Left colon (tissue), 2 donors: ENCODE measurements at regions of chr11 and their contacts with region 1.

Region 1: DNA sequence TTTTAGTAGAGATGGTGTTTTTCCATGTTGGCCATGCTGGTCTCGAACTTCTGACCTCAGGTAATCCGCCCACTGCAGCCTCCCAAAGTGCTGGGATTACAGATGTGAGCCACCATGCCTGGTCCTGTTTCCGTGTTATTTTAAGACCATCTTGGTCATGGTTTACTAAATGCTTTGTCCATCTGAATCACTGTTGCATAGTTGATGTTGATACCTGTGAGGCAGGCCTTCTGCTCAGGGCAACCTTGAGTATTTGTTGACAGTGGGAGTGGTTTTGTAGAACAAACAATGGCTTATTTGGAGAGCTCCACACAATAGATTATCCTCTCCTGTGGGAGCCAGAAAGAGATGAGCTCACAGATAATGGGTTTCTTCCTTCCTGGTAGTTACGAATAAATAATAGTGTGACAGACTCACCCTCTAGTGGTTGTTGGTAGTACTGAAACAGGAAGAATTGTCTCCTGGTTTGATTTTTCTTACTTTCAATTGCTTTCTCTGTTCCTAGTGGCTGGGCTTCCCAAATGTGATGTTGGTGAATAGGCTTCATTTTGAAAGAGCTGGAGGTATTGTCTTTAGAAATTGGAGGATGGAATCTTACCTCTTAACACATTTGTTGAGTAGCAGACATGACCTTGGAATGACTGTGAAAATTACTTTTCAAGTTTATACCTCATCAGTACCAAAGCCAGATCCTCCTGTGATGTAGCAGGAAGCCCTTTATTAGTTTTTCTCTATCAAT is 39.0 kb downstream of the CTNND1 start:
- DNase-seq: no peak
- ATAC-seq: peak; percentile 67

Region 2: DNA sequence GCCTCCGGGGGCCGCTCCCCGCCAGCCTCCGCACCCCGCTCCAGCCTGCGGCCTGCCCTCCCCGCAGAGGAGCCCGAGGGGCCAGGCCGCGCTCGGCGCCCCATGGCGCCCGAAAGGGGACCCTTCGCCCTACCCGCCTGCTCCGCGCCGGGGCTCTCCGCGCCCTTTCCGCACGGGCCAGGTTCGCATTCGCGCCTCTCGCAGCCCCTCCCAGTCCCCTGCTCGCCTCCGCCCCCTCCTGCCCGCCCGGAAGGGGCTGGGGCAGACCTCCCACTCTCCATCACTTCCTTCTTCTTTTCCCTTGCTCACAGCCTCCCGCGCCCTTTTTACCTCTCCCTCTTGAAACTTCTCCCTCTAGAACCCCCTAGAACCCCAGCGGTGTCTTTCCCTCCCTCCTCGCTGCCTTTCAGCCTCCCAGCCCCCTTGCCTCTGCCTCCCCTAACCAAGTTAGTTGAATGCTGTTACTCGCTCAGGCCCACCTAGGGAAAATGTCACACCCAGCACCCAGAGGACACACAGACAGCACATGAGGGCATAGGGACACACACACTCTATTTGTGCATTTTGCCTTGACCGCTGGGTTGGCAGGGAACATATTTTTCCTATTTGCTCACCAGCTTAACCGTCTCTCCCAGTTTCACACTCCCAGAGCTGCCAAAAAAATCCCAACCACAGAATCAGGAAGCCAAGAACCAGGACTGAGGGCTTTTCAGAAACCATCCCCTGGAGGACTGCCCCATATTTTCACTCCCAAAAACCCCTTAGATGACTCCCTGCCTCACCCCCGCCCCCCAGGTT is 373.5 kb before region 1 on chr11 and contains the start of gene SLC43A3:
- intact Hi-C with region 1: no loop called
- DNase-seq: peak; percentile 62 to 65
- ATAC-seq: peak; percentile 57
- total RNA-seq, gene SLC43A3: 6.9 to 9.6 TPM

Region 3: DNA sequence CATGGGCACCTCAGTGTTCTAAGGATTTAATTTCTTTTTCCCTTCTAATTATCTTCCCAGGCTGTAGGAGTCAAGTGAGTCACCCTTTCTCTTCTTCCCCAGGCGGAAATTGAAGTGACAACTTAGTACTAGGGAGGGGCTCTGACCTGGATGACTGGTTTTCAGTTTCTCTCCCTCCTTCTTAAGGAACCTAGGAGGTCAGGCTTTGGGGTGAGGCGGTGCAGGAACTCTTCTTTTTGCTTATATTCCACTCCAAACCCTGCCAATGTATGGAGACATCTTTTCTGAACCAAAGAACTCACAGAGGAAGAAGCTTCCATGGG is 120.1 kb before region 1 on chr11:
- intact Hi-C with region 1: no loop called
- DNase-seq: no peak
- ATAC-seq: peak; percentile 72

Region 4: DNA sequence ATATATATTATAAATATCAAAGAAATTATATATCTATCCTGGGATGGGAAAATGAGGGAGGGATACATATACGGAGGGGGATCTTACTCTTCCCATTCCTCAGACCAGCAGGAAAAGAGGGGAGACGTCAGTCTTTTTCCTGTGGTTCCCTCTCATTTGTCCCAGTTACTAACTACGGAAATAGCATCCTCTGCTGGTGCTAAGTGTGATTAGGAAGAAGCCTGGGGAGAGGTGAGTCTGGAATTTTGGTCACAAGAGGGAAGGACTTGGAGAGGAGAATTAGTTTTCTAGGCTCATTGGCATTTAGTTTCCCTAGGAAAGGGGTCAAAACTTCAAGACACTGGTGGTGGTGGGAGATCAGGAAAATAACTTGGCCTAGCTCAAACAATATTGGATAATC is 100.2 kb before region 1 on chr11:
- intact Hi-C with region 1: no loop called
- DNase-seq: no peak
- ATAC-seq: no peak

Region 5: GRCh38 chr11:57741132-57742086 is 59.2 kb before region 1 on chr11 and contains the start of gene SELENOH:
- intact Hi-C with region 1: loop called in 1 of 2 experiments (anchors 5 kb)
- DNase-seq: peak; percentile 94 to 98
- ATAC-seq: peak; percentile 96
- total RNA-seq, gene SELENOH: 64.0 to 77.4 TPM

Region 6: DNA sequence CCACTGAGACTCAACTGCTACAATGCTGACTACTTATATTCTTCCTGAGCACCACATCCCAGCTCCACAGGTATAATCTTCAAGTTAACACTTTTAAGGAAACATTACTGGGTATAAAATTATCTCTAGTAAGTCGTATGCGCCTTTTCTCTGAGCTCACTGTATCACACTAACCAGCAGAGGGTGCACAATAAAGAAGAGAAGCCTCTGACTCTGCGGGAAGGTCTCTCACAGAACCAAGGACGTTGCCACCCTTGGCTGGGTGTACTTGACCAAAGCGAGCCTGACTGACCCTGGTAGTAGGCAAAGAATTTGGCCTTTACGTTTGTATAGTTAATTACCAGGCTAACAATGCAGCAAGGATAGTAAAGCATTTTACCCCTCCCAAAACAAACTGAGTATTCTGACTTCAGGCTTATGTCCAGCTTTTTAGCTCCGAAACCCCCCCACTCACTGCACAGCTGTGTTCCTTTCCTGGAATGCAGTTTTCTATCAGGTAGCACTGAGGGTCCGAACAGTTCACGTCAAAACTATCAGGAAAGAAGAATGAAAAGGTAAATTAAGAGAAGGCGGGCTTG is 48.8 kb before region 1 on chr11 and contains the start of gene BTBD18:
- intact Hi-C with region 1: loop called in 1 of 2 experiments (anchors 5 kb)
- DNase-seq: peak in 1 of 2 donors; percentile 30
- ATAC-seq: peak; percentile 96
- total RNA-seq, gene BTBD18: not detected

Region 7: GRCh38 chr11:57761301-57762234 is 39.0 kb before region 1 on chr11 and contains the start of gene CTNND1:
- intact Hi-C with region 1: loop called in 1 of 2 experiments (anchors 5 kb)
- DNase-seq: peak; percentile 82 to 94
- ATAC-seq: peak; percentile 90
- total RNA-seq, gene CTNND1: 458 to 553 TPM

Region 8: GRCh38 chr11:58152781-58153180 is 352.2 kb after region 1 on chr11:
- intact Hi-C with region 1: no loop called
- DNase-seq: no peak
- ATAC-seq: no peak